GM13977 (cell line): ENCODE measurements at regions of chr12 and their contacts with region 1.

Region 1: DNA sequence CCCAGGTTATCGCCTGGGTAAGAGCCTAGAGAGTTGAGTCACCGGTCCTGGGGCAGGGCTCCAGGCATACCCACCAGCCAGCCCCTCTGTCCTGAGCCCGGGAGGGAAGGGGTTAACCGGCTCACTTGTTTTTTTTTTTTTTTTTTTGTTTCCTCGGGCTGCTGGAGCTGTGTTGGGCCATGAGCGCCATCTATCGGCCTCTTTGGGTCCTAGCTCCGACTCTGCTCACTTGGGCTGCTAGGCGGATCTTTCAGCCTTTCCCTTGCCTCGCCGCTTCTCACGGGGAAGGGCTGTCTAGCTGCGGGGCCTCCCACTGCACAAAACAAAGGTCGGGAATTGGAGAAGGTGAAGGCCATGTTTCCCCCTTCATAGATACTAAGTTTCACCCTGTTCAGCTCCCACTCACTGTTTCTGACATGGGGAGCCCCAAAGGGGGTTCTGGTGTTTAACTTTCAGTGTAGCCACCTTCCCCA is 2.8 kb upstream of the SMUG1 start:
- DNase-seq: peak; percentile 78
- CTCF ChIP-seq: peak; percentile 85

Region 2: DNA sequence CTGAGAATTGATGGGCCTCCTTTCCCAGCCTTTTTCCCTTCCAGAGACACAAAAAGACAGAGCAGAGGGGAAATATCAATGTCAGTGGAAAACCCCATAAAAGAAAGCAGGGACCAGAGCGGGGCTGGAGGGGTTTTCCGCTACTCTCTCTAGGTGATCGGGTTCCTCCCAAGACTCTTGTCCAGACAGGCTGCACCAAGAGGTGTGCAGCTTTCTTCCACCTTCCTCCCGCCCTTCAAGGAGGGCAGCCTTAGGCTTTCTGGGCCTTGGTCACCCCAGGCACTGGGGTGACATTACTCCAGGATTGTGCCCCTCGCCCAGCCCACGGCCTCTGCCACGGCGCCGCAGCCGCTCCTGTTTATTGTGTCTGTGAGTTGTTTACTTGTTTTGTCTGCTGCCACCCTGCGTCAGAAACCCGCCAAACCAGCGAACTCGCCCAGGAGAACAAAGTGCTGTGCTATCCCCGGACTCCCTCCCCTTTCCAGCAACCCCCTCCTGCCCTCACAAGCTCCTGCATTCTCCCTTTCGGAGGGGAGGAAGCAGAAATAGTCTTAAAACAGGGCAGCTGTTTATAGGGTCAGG is 170.1 kb before region 1 on chr12:
- in situ Hi-C with region 1: loop called (anchors 10 kb)
- DNase-seq: no peak
- CTCF ChIP-seq: peak; percentile 46

Region 3: DNA sequence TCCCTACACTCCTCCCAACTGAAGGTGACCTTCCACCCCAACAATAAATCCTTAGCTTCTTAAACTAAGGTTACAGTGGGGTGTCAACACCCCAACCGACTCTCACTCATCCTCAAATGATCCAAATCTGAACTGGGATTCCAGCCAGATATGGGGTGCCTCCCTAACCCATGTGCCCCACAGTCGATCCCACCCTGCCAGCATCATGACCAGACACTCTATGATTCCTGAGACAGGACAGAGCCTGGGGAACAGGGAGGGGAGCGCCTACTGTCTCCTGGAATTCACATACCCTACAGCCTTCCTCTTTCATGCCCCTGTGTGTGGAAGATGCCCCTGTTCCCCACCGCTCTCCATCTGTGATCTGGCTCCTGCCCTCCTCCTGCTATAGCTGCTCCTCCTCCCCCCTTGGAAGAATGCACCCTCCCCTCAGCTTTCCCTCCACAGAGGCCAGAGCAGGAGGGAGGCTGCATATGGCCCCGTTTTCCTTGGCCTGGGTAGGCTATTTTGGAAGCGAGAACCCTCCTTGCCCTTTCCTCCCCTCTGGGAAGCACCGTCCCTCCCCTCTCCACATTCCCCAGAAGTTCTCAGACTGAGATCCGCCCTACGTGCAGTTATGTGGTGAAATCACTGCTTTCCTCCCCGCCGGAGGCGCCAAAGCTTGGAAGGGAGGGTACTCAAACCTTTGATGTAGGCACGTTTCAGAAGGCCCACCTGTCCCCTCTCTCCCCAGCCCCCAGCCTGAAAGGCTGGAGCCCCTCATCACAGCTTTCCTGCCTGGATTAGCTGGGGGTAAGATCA is 50.8 kb before region 1 on chr12:
- in situ Hi-C with region 1: no loop called
- DNase-seq: no peak
- CTCF ChIP-seq: no peak

Region 4: GRCh38 chr12:54588110-54588889 is 396.7 kb after region 1 on chr12 and contains the start of gene PPP1R1A:
- in situ Hi-C with region 1: no loop called
- DNase-seq: no peak
- CTCF ChIP-seq: no peak